ENCODE measurements at regions of chr6 and their contacts with region 1.

Region 1: GRCh38 chr6:136846046-136846445 is 23.7 kb downstream of the PEX7 start:
- DNase-seq: peak; percentile 31
- H3K4me3 ChIP-seq: no peak overlapping the region
- CTCF ChIP-seq: peak; percentile 60

Region 2: DNA sequence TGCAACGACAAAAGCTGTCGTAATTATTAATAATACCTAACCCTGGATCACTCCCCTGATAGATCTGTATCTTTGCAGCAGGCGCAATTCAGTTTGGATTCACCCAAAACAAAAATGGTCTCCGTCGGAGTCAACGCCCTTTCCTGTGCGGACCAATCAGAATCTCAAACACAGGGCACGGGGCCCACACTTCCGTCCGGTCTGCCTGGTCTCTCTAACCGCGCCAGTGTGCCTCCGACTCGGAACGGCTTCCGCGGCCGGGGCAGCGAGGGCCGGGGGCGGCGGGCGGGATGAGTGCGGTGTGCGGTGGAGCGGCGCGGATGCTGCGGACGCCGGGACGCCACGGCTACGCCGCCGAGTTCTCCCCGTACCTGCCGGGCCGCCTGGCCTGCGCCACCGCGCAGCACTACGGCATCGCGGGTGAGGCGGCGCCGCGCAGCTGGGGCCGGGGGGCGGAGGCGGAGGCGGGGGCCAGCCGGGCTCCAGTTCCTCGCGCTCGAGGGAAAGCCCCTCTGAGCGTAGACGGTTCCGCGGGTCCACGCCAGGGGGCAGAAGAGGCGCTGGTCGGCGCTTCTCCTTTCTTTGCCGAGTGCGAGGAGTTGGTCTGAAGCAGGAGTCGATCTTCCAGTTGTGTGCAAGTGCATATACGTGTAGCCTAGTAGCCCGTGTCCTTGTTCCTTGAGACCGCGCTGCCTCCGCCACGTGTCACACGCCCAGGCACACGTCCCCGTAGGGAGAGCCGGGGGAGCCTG is 23.5 kb before region 1 on chr6 and contains the start of gene PEX7:
- CTCF ChIA-PET with region 1: interaction called, 27 read pairs
- POLR2A ChIA-PET with region 1: no interaction called
- DNase-seq: peak; percentile 58
- H3K4me3 ChIP-seq: peak within 1 kb of the TSS; percentile 82
- CTCF ChIP-seq: peak; percentile 92

Region 3: GRCh38 chr6:136831873-136832562 is 14.0 kb before region 1 on chr6:
- CTCF ChIA-PET with region 1: interaction called, 27 read pairs
- POLR2A ChIA-PET with region 1: no interaction called
- DNase-seq: no peak
- H3K4me3 ChIP-seq: no peak overlapping the region
- CTCF ChIP-seq: no peak

Region 4: GRCh38 chr6:136859430-136859829 is 13.4 kb after region 1 on chr6:
- CTCF ChIA-PET with region 1: interaction called, 12 read pairs
- POLR2A ChIA-PET with region 1: no interaction called
- DNase-seq: no peak
- H3K4me3 ChIP-seq: no peak overlapping the region
- CTCF ChIP-seq: no peak

Region 5: GRCh38 chr6:137013738-137014602 is 167.9 kb after region 1 on chr6:
- CTCF ChIA-PET with region 1: interaction called, 10 read pairs
- POLR2A ChIA-PET with region 1: no interaction called
- DNase-seq: peak; percentile 44
- H3K4me3 ChIP-seq: no peak overlapping the region
- CTCF ChIP-seq: peak; percentile 48